ENCODE measurements at regions of chr4 and their contacts with region 1.

Region 1: DNA sequence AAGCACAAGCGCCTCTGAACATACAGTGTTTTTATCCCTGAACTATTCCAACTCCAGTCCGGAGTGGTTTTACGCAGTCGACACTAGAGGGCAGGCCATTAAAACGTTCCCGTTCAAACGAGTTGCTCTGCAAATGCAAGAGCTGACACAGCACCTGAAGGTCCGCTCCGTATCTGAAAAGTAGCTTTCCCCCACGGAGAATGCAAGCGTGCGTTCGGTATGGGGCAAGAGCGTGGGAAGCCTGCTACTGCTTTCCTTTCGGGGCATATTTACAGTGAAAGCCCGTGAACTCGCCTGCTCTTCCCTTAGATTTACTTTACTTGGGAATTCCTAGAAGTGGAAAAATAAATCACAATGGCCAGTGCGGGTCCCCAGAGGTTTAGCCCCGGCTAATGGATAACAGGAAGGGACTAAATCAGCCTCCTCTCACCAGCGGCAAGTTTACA is 190.8 kb downstream of the TSPAN5 start:
- DNase-seq: no peak
- ATAC-seq: peak; percentile 98
- H3K4me3 ChIP-seq: no peak overlapping the region
- H3K27ac ChIP-seq: no peak overlapping the region
- H3K4me1 ChIP-seq: no peaks in the 10 kb centered on the region
- H3K27me3 ChIP-seq: peaks cover 0 to 2% of the 10 kb centered on the region in 2 experiments; a peak in 1 of 4 replicates
- CTCF ChIP-seq: peak; percentile 74 to 90 (median 76)
- EP300 ChIP-seq: no peak
- POLR2A ChIP-seq: no peak
- RAD21 ChIP-seq: peak; percentile 95

Region 2: DNA sequence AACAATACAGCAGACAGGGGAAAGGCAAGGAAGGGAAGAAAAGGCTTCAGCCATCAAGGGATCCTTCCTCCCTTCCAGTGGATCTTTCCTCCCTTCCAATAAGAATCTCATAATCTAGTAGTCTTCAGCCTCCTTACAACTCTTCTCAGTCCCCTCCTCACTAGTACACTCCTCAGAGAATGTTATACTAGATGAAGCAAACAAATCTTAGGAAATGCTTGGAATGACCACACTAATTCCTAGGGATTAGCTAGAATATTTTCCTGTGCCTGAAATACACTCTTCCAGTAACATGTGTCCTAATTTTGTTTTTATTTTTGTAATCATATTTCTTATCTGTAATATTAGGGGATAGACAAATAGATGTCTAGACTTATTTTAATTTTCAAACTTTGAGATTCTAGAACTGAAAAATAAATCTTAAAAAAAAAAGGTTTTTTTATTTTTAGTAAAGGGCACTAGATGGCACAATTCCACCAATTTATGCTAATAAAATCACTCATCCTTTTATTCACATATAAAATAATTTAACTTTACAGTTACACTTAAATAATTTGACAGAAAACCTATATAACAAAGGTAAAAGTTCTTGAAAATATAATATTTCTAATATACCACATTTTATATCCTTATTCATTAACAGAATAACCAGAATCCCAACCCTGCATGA is 317.4 kb before region 1 on chr4:
- CTCF ChIA-PET with region 1: interaction called, 10 read pairs
- POLR2A ChIA-PET with region 1: no interaction called
- RAD21 ChIA-PET with region 1: interaction called, 4 read pairs
- SMC1A ChIA-PET with region 1: interaction called, 4 read pairs
- in situ Hi-C with region 1: no loop called
- intact Hi-C with region 1: loop called (anchors 5 kb)
- DNase-seq: no peak
- ATAC-seq: no peak
- H3K4me3 ChIP-seq: no peak overlapping the region
- H3K27ac ChIP-seq: no peak overlapping the region
- H3K4me1 ChIP-seq: no peaks in the 10 kb centered on the region
- H3K27me3 ChIP-seq: no peaks in the 10 kb centered on the region; a peak in 1 of 4 replicates
- CTCF ChIP-seq: no peak; a peak in 1 of 6 replicates
- EP300 ChIP-seq: no peak
- POLR2A ChIP-seq: no peak
- RAD21 ChIP-seq: no peak

Region 3: GRCh38 chr4:98363431-98363830 is 104.2 kb before region 1 on chr4:
- CTCF ChIA-PET with region 1: no interaction called
- POLR2A ChIA-PET with region 1: no interaction called
- RAD21 ChIA-PET with region 1: no interaction called
- SMC1A ChIA-PET with region 1: no interaction called
- in situ Hi-C with region 1: no loop called
- intact Hi-C with region 1: no loop called
- DNase-seq: no peak
- ATAC-seq: no peak
- H3K4me3 ChIP-seq: no peak overlapping the region
- H3K27ac ChIP-seq: no peak overlapping the region
- H3K4me1 ChIP-seq: no peaks in the 10 kb centered on the region
- H3K27me3 ChIP-seq: no peaks in the 10 kb centered on the region
- CTCF ChIP-seq: no peak
- EP300 ChIP-seq: no peak
- POLR2A ChIP-seq: no peak
- RAD21 ChIP-seq: no peak

Region 4: DNA sequence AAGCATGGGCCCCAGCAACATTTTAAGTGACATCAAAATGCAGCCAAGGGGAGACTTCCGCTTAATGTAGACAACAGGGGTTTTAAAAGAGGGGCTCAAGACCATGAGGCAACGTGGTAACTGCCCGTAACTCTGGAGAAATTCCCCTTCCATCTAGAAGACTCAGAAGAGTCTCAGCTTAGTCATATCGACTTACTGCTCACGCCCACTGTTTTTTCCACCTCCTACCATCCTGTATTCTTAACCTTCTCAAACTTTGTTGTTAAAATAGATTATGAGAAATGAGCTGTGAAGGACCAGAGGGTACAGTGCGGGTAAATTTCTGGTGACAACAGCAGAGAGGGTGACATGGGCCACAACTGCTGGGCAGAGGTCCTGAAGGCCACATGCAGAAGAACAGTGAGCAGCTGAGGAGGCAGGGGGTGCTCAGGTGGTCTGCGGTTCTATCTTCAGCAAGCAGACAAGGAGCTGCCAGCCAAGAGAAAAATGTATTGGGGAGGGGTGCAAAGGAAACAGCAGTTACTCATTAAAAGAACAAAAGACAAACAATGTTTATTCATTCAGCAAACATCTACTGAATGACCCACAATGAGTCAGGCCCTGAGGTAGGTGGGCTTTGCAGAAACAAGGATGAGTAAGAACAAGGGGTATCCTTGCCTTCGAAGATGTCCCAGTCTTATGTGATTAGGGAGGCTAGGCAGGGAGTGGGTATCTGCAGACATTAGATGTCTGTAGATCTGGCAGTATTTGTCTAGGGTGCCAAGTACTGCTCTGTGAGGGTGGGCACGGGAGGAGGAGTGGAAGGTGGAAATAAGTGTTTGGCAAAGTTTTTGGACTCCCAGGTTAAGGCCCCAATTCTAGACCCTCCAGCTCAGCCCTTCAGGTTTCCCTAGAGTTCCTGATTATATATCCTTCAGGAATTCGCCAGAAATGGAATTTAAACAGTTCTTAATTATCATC is 15.5 kb after region 1 on chr4:
- CTCF ChIA-PET with region 1: interaction called, 25 read pairs
- POLR2A ChIA-PET with region 1: interaction called, 6 read pairs
- RAD21 ChIA-PET with region 1: interaction called, 10 read pairs
- SMC1A ChIA-PET with region 1: interaction called, 37 read pairs
- in situ Hi-C with region 1: no loop called
- intact Hi-C with region 1: no loop called
- DNase-seq: peak; percentile 56
- ATAC-seq: peak; percentile 90
- H3K4me3 ChIP-seq: no peak overlapping the region; the same call in 1 of the 2 replicates
- H3K27ac ChIP-seq: no peak overlapping the region
- H3K4me1 ChIP-seq: peaks cover 9% of the 10 kb centered on the region
- H3K27me3 ChIP-seq: no peaks in the 10 kb centered on the region
- CTCF ChIP-seq: no peak
- EP300 ChIP-seq: peak; percentile 70 to 91
- POLR2A ChIP-seq: no peak
- RAD21 ChIP-seq: no peak

Region 5: GRCh38 chr4:98601708-98602107 is 134.1 kb after region 1 on chr4:
- CTCF ChIA-PET with region 1: interaction called, 3 read pairs
- POLR2A ChIA-PET with region 1: no interaction called
- RAD21 ChIA-PET with region 1: interaction called, 11 read pairs
- SMC1A ChIA-PET with region 1: interaction called, 5 read pairs
- in situ Hi-C with region 1: no loop called
- intact Hi-C with region 1: no loop called
- DNase-seq: no peak
- ATAC-seq: peak; percentile 81
- H3K4me3 ChIP-seq: no peak overlapping the region
- H3K27ac ChIP-seq: no peak overlapping the region
- H3K4me1 ChIP-seq: no peaks in the 10 kb centered on the region
- H3K27me3 ChIP-seq: no peaks in the 10 kb centered on the region
- CTCF ChIP-seq: no peak; a peak in 1 of 6 replicates
- EP300 ChIP-seq: no peak
- POLR2A ChIP-seq: no peak
- RAD21 ChIP-seq: no peak

Region 6: DNA sequence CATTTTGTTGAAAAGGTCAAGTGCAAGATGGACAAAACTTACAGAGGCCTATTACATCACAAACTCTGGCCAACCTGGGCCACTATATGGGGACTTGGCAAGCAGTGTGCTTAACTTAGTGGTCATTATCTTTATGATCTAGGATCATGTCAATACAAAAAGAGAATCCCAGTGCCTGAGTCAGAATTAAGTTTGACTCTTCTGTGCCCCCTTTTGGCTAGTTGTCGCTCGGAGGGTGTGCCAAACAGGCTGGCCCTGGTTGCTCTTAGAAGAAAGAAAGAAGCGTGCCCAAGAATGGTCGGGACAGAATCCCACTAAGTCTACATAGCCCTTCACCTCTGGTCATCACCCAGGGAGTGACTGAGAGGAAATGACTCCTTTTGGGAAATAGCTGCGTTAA is 361.2 kb after region 1 on chr4:
- CTCF ChIA-PET with region 1: interaction called, 6 read pairs
- POLR2A ChIA-PET with region 1: no interaction called
- RAD21 ChIA-PET with region 1: no interaction called
- SMC1A ChIA-PET with region 1: no interaction called
- in situ Hi-C with region 1: no loop called
- intact Hi-C with region 1: loop called (anchors 5 kb)
- DNase-seq: no peak
- ATAC-seq: peak; percentile 64
- H3K4me3 ChIP-seq: no peak overlapping the region
- H3K27ac ChIP-seq: no peak overlapping the region
- H3K4me1 ChIP-seq: no peaks in the 10 kb centered on the region
- H3K27me3 ChIP-seq: no peaks in the 10 kb centered on the region
- CTCF ChIP-seq: peak; percentile 6 to 25 (median 24); a peak in 2 of 6 replicates
- EP300 ChIP-seq: no peak
- POLR2A ChIP-seq: no peak
- RAD21 ChIP-seq: peak; percentile 24; the same call in 1 of the 2 replicates

Region 7: DNA sequence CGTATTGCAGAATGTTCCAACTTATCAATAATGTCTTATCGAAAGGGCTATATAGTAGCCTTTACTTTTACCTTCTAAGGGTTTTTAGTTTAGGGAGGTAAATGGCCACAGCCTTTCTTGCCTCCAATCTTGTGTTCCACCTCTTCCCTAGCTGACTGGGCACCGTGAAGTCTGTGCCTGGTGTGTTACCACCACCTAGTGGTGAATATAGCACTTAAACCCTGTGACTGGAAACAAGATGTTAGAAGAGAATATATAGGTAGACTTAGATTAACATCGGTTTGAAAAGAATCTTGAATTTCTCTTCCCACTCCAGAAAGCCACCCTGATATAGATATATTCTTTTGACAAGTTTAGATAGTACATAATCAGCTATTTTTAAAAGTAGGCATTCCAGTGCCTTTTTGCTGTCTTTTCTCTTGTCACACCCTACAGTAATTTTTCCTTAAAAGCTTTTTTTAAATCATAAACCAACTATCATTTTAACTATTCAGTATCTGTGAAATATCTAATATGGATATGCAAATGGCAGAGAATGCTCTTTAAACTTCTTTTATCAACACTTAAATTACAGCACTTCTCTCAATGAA is 995.3 kb after region 1 on chr4:
- CTCF ChIA-PET with region 1: interaction called, 11 read pairs
- POLR2A ChIA-PET with region 1: no interaction called
- RAD21 ChIA-PET with region 1: interaction called, 4 read pairs
- SMC1A ChIA-PET with region 1: interaction called, 3 read pairs
- in situ Hi-C with region 1: no loop called
- intact Hi-C with region 1: no loop called
- DNase-seq: peak; percentile 24
- ATAC-seq: peak; percentile 99
- H3K4me3 ChIP-seq: no peak overlapping the region
- H3K27ac ChIP-seq: no peak overlapping the region
- H3K4me1 ChIP-seq: no peaks in the 10 kb centered on the region
- H3K27me3 ChIP-seq: no peaks in the 10 kb centered on the region
- CTCF ChIP-seq: peak; percentile 67 to 89 (median 75); a peak in 5 of 6 replicates
- EP300 ChIP-seq: no peak
- POLR2A ChIP-seq: no peak
- RAD21 ChIP-seq: peak; percentile 96

Measured in GM12878 (cell line).